ENCODE measurements at regions of chr22 and their contacts with region 1.

Region 1: DNA sequence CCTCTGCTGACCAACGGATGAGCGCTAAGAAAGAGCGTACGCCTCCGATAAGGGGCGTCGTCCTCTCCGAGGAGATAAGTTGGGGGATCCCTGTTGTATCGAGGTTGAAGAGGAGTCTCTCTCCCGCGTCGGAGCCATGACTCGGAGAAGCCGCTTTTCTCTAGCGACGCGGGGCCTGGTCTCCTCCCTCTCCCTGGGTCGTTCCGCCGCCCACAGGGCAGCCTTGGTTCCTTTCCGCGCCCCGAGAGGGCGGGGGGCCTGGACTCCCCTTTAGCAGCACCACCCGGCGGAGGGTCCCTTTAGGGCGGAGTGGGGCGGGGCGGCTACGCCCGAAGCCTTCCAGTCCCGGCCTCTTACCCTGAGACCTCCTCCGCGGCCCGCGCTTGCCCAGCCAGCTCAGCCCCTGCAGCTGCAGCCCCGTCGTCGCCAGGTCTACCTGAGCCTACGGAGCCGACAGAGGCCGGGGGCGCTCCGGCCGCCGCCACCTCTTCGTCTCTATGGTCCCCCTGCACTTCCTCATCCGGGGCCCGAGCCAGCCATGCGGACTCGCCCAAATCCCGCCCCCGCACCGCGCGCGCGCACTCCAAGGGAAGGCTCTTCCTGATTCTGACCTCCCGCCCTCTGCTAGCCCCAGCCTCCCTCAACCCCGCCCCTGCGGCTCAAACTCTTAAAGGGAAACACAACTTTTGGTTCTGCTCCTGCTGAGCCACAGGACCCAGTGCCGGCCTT is at the start of gene PRR14L:
- DNase-seq: peak; percentile 96
- H3K4me3 ChIP-seq: peak within 1 kb of the TSS; percentile 75 to 89 (median 82)
- H3K27ac ChIP-seq: peak within 1 kb of the TSS; percentile 66
- H3K4me1 ChIP-seq: peaks cover 37% of the 10 kb centered on the region
- H3K27me3 ChIP-seq: no peaks in the 10 kb centered on the region
- CTCF ChIP-seq: no peak
- POLR2A ChIP-seq: peak; percentile 93
- total RNA-seq, gene PRR14L: 47.5 and 53.8 TPM in 2 replicates

Region 2: GRCh38 chr22:31496007-31496734 is 253.6 kb before region 1 on chr22 and contains the start of gene SFI1:
- CTCF ChIA-PET with region 1: no interaction called
- POLR2A ChIA-PET with region 1: no interaction called
- dilution Hi-C with region 1: no loop called
- intact Hi-C with region 1: loop called (anchors 5 kb)
- DNase-seq: peak; percentile 92
- H3K4me3 ChIP-seq: peak within 1 kb of the TSS; percentile 60 to 85 (median 81)
- H3K27ac ChIP-seq: peak within 1 kb of the TSS; percentile 52
- H3K4me1 ChIP-seq: peaks cover 14% of the 10 kb centered on the region
- H3K27me3 ChIP-seq: no peaks in the 10 kb centered on the region
- CTCF ChIP-seq: peak; percentile 11 to 38
- POLR2A ChIP-seq: peak; percentile 16
- total RNA-seq, gene SFI1: 38.3 and 46.4 TPM in 2 replicates

Region 3: DNA sequence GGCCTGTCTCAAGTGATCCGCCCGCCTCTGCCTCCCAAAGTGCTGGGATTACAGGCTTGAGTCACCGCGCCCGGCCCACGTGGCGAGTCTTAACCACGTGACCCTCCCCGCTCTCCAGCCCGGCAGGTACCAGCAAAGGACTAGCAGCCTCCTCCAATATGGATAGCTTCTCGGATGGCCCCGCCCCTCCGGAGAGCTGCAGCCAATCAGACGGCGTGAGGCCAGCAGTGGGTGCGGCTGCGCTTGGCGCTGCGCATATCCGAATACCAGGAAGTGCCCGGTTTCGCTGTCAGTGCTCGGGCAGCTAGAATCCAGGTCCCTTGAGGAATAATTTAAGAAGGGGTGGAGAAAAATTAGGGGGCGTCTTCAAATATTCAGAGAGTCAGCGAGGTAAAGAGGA is 73.1 kb before region 1 on chr22:
- CTCF ChIA-PET with region 1: no interaction called
- POLR2A ChIA-PET with region 1: no interaction called
- dilution Hi-C with region 1: no loop called
- intact Hi-C with region 1: loop called (anchors 5 kb)
- DNase-seq: peak; percentile 93
- H3K4me3 ChIP-seq: peak overlapping the region; percentile 31 to 53 (median 34)
- H3K27ac ChIP-seq: peak overlapping the region; percentile 63
- H3K4me1 ChIP-seq: peaks cover 4% of the 10 kb centered on the region
- H3K27me3 ChIP-seq: no peaks in the 10 kb centered on the region
- CTCF ChIP-seq: no peak
- POLR2A ChIP-seq: peak; percentile 44

Region 4: DNA sequence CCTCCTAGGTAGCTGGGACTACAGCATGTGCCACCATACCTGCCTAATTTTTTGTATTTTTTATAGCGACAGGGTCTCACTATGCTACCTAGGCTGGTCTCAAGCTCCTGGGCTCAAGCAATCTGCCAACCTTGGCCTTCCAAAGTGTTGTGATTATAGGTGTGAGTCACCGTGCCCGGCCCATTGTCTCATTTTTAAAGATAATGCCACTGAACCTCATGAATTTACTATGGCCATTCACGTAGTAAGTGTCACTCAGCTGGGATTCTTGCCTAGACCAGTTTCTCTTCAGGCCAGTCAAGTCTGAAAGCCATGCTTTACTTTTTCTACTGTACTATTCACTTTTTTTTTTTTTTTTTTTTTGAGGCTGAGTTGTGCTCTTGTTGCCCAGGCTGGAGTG is 26.4 kb after region 1 on chr22:
- CTCF ChIA-PET with region 1: no interaction called
- POLR2A ChIA-PET with region 1: no interaction called
- dilution Hi-C with region 1: no loop called
- intact Hi-C with region 1: loop called (anchors 2 kb)
- DNase-seq: peak; percentile 16
- H3K4me3 ChIP-seq: no peak overlapping the region
- H3K27ac ChIP-seq: peak overlapping the region; percentile 6
- H3K4me1 ChIP-seq: peaks cover 16% of the 10 kb centered on the region
- H3K27me3 ChIP-seq: no peaks in the 10 kb centered on the region
- CTCF ChIP-seq: no peak
- POLR2A ChIP-seq: no peak

Region 5: DNA sequence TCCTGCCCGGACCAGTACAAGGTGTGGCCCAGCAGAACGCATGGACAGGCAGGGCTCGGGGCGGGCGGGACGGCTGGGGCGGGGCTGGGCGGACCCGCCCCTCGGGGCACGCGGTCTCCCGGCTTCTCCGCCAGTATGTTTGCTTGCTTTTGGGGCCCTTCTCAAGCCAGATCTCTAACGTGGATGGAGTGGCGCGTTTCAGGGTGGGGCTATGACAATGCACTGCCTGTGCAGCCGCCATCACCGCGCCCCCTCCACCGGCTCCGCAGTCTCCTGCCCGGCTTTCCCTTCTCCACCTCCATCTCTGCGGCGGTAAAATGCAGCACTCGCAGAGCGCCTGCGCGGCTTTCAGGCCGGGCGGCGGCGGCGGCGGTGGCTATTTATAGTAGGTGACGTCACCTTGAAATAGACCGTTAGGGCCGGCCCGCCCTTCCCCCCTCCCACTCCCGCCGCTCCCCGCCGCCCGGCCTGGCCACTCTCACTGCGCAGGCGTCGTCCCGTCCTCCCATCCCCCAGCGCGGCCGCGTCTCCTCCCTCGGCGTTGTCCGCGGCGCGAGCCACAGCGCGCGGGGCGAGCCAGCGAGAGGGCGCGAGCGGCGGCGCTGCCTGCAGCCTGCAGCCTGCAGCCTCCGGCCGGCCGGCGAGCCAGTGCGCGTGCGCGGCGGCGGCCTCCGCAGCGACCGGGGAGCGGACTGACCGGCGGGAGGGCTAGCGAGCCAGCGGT is 194.3 kb after region 1 on chr22 and contains the start of gene YWHAH:
- CTCF ChIA-PET with region 1: no interaction called
- POLR2A ChIA-PET with region 1: no interaction called
- dilution Hi-C with region 1: no loop called
- intact Hi-C with region 1: loop called (anchors 1 kb)
- DNase-seq: peak; percentile 95
- H3K4me3 ChIP-seq: peak within 1 kb of the TSS; percentile 94 to 100 (median 96)
- H3K27ac ChIP-seq: peak within 1 kb of the TSS; percentile 74
- H3K4me1 ChIP-seq: peaks cover 24% of the 10 kb centered on the region
- H3K27me3 ChIP-seq: no peaks in the 10 kb centered on the region
- CTCF ChIP-seq: no peak
- POLR2A ChIP-seq: peak; percentile 90
- total RNA-seq, gene YWHAH: 170 and 182 TPM in 2 replicates

Region 6: DNA sequence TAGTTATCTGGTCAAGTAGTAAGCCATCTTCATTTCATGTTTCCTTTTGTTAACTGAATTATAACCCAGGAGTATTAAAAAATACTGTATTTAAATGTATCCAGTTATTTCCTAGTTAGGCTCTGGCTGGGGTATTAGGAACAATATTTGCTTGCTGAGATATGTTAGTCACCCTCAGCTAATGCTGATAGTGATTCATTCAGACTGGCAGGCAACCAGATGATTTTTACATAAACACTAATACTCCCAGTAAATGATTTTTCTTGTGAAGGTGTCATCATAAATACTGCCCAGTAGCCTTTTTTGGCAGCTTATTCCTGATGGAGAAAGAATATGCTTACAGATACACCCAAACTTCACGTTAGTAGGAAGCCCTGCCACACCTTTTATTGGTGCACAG is 202.7 kb after region 1 on chr22:
- CTCF ChIA-PET with region 1: no interaction called
- POLR2A ChIA-PET with region 1: no interaction called
- dilution Hi-C with region 1: loop called (anchors 10 kb)
- intact Hi-C with region 1: no loop called
- DNase-seq: peak; percentile 89
- H3K4me3 ChIP-seq: no peak overlapping the region
- H3K27ac ChIP-seq: peak overlapping the region; percentile 74
- H3K4me1 ChIP-seq: peaks cover 45% of the 10 kb centered on the region
- H3K27me3 ChIP-seq: no peaks in the 10 kb centered on the region
- CTCF ChIP-seq: no peak
- POLR2A ChIP-seq: no peak